ENCODE measurements at regions of chr20 and their contacts with region 1.

Region 1: GRCh38 chr20:14245368-14245970 is 91.9 kb downstream of the FLRT3 start:
- DNase-seq: no peak
- H3K4me3 Mint-ChIP-seq: no peak overlapping the region
- H3K27ac Mint-ChIP-seq: no peak overlapping the region
- H3K4me1 Mint-ChIP-seq: no peaks in the 10 kb centered on the region
- H3K27me3 Mint-ChIP-seq: no peaks in the 10 kb centered on the region
- CTCF ChIP-seq: no peak

Region 2: DNA sequence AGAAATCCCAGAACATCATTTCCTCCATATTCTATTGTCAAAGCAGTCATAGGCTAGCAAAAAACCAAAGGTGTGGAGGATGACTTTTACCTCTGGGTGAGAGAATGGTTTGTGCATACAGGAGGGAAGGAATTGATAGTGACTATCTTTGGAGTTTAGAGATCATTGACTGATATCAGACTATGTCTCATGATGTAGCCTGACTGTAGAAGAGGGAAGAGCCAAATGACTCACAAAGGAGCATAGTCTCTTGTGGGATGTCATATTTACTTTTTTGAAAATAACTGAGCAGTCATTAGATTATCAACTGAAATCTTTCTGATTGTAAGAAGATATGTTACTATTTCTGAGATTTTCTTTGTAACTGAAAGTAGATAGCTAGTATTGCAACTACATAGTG is 66.5 kb before region 1 on chr20:
- CTCF ChIA-PET with region 1: no interaction called
- POLR2A ChIA-PET with region 1: no interaction called
- intact Hi-C with region 1: no loop called
- DNase-seq: no peak
- H3K4me3 Mint-ChIP-seq: no peak overlapping the region
- H3K27ac Mint-ChIP-seq: no peak overlapping the region
- H3K4me1 Mint-ChIP-seq: no peaks in the 10 kb centered on the region
- H3K27me3 Mint-ChIP-seq: no peaks in the 10 kb centered on the region
- CTCF ChIP-seq: no peak

Region 3: DNA sequence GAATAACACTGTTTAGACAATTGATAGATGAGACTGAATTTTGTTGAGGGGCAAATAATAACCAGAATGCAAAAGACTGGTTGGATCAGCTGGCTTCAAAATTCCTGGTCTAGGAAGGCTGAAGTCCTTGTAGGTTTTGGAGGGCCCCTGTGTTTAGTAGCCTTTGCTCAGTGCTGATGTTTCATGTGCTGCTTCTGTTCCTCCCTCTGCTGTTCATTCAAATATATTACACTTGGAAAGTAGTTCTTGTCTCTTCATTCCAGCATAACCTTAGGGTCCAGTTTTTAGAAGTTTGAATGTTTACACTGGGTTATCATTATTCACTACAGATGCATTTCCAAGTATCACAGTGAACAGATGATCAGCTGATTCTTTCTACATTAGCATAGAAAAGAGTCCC is 19.4 kb after region 1 on chr20:
- CTCF ChIA-PET with region 1: interaction called, 10 read pairs
- POLR2A ChIA-PET with region 1: no interaction called
- intact Hi-C with region 1: no loop called
- DNase-seq: peak; percentile 26
- H3K4me3 Mint-ChIP-seq: no peak overlapping the region
- H3K27ac Mint-ChIP-seq: no peak overlapping the region
- H3K4me1 Mint-ChIP-seq: no peaks in the 10 kb centered on the region
- H3K27me3 Mint-ChIP-seq: no peaks in the 10 kb centered on the region
- CTCF ChIP-seq: peak; percentile 25

Region 4: DNA sequence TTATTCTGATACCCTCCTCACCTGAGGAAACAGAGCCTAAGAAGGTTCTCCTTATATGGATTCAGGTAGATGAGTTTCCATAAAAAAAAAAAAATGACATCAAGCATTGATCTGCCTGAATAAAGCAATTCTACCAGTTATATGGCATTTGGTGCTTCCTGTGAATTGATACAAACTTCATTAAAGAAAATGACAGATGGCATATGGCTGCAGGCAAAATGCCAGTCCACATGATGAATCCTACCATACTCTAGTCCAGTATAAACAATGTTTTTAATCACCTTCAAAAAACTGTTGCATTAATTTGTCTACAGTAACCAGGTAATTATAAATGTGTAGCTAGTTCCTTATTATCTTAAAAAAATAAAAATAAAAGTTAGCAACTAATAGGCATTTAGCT is 651.1 kb after region 1 on chr20:
- CTCF ChIA-PET with region 1: no interaction called
- POLR2A ChIA-PET with region 1: no interaction called
- intact Hi-C with region 1: no loop called
- DNase-seq: no peak
- H3K4me3 Mint-ChIP-seq: no peak overlapping the region
- H3K27ac Mint-ChIP-seq: no peak overlapping the region
- H3K4me1 Mint-ChIP-seq: no peaks in the 10 kb centered on the region
- H3K27me3 Mint-ChIP-seq: no peaks in the 10 kb centered on the region
- CTCF ChIP-seq: no peak

Measured in MCF 10A (cell line).